ENCODE measurements at regions of chr1 and their contacts with region 1.

Region 1: DNA sequence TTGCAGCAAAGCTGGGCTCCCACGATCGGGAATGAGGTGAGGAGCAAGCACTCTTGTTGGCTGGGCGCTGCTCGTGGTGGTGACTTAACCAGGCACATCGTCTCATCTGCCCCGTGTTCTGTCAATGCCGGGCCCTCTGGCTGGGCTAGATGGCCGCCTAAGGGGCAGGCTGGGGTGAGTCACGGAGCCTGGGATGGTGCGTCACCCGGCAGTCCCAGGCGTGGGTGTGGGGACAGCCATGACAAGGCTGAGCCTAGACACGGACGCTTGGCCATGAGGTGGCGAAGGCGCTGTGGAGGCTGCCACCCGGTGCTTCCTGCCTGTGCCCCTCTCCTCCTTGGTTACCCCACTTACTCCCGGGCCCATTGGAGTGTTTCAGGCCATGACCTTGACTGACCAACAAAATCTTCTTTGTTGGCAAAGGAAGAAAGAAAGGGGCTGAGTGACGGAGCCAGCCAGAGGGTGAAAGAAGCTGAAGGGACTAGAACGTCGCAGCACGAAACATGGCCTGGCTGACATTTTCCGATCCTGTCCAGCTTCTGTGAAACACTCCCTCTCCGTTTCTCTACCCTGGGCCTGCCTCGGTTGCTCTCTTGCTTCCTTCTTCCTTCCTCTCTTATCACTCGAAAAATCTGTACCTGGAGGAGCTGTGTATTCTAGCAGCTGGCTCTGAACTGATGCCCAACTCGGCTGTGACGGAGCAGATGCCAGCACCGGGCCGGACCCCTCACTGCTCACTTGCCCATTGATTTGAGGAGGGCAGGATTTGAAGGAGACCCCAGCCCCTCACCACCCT is 596 bp downstream of the CD247 start:
- DNase-seq: peak; percentile 72 to 92 (median 78)
- H3K4me3 ChIP-seq: peak overlapping the region; percentile 97
- H3K4me3 Mint-ChIP-seq: peak overlapping the region; percentile 94 to 100 (median 100)
- H3K27ac ChIP-seq: peak overlapping the region; percentile 97
- H3K27ac Mint-ChIP-seq: peak overlapping the region; percentile 97 to 100 (median 99)
- H3K4me1 ChIP-seq: peaks cover 47% of the 10 kb centered on the region
- H3K4me1 Mint-ChIP-seq: peaks cover 38 to 60% (median 56%) of the 10 kb centered on the region in 3 donors
- H3K27me3 ChIP-seq: no peaks in the 10 kb centered on the region
- H3K27me3 Mint-ChIP-seq: no peaks in the 10 kb centered on the region

Region 2: GRCh38 chr1:167401260-167401873 is 116.4 kb before region 1 on chr1:
- CTCF ChIA-PET with region 1: interaction called, 13 read pairs
- POLR2A ChIA-PET with region 1: no interaction called
- DNase-seq: peak; percentile 30 to 68 (median 41)
- H3K4me3 ChIP-seq: no peak overlapping the region
- H3K4me3 Mint-ChIP-seq: no peak overlapping the region
- H3K27ac ChIP-seq: no peak overlapping the region
- H3K27ac Mint-ChIP-seq: peak overlapping the region in 3 of 8 donors; percentile 9 to 32 (median 13)
- H3K4me1 ChIP-seq: no peaks in the 10 kb centered on the region
- H3K4me1 Mint-ChIP-seq: peaks cover 0 to 4% (median 3%) of the 10 kb centered on the region in 3 donors
- H3K27me3 ChIP-seq: no peaks in the 10 kb centered on the region
- H3K27me3 Mint-ChIP-seq: no peaks in the 10 kb centered on the region

Region 3: DNA sequence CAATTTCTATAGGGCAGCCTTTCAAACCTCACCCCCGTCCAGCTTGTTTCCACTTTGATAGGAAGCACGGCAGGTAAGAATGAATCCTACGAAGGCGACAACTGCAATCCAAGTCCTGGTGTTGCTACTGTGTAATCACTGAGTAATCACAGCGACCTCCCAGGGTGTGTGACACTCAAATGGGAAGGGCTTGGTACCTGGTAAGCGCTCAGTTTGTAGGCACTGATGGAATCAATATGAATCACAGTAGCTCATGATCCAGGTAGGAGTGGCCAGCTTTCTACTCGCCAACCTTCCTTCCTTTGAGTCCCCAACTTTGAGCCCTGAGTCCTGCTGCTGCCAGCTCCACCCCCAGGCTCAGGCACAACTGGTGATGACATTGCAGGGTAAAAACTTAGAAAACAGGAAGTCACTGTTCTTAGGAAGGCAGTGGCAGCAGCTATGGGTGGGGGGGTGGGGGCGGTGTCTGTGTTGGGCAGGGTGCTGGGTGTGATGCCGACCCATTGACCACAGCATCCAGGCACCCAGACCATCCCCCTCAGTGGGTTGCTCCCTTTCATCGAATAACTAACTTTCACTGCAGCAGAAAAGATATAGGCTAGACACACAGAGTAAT is 70.1 kb before region 1 on chr1:
- CTCF ChIA-PET with region 1: interaction called, 19 read pairs
- POLR2A ChIA-PET with region 1: interaction called, 27 read pairs
- DNase-seq: peak; percentile 52 to 81 (median 71)
- H3K4me3 ChIP-seq: peak overlapping the region; percentile 54
- H3K4me3 Mint-ChIP-seq: peak overlapping the region; percentile 22 to 92 (median 83)
- H3K27ac ChIP-seq: peak overlapping the region; percentile 59
- H3K27ac Mint-ChIP-seq: peak overlapping the region; percentile 81 to 99 (median 96)
- H3K4me1 ChIP-seq: peaks cover 79% of the 10 kb centered on the region
- H3K4me1 Mint-ChIP-seq: peaks cover 78 to 93% (median 86%) of the 10 kb centered on the region in 3 donors
- H3K27me3 ChIP-seq: no peaks in the 10 kb centered on the region
- H3K27me3 Mint-ChIP-seq: peaks cover 0 to 2% of the 10 kb centered on the region in 2 donors

Region 4: DNA sequence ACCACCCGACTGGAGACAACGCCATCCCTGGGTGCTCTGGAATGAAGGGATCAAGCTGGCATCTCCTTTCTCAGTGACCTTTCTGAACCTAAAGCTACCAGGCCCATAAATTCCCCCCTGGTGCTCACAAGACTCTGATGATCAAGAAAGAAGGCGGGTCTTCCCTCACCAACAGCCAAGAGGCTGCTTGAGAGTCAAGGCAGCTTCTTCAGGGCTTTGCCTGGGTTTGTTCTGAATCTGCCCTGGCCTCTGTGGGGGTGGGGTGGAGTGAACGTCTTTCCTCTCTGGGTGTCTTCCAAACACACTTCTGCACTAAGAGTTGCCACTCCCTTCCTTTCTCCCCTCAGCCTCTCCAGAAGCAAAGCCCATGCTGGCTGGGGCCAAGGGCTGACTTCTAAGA is 35.5 kb before region 1 on chr1:
- CTCF ChIA-PET with region 1: interaction called, 13 read pairs
- POLR2A ChIA-PET with region 1: interaction called, 6 read pairs
- DNase-seq: no peak
- H3K4me3 ChIP-seq: peak overlapping the region; percentile 46
- H3K4me3 Mint-ChIP-seq: peak overlapping the region; percentile 52 to 92 (median 71)
- H3K27ac ChIP-seq: no peak overlapping the region
- H3K27ac Mint-ChIP-seq: peak overlapping the region; percentile 83 to 97 (median 92)
- H3K4me1 ChIP-seq: peaks cover 98% of the 10 kb centered on the region
- H3K4me1 Mint-ChIP-seq: peaks cover 93 to 100% (median 99%) of the 10 kb centered on the region in 3 donors
- H3K27me3 ChIP-seq: no peaks in the 10 kb centered on the region
- H3K27me3 Mint-ChIP-seq: no peaks in the 10 kb centered on the region

Region 5: GRCh38 chr1:167533851-167534300 is 16.1 kb after region 1 on chr1:
- CTCF ChIA-PET with region 1: interaction called, 44 read pairs
- POLR2A ChIA-PET with region 1: interaction called, 3 read pairs
- DNase-seq: peak; percentile 43 to 73 (median 57)
- H3K4me3 ChIP-seq: no peak overlapping the region
- H3K4me3 Mint-ChIP-seq: no peak overlapping the region
- H3K27ac ChIP-seq: no peak overlapping the region
- H3K27ac Mint-ChIP-seq: no peak overlapping the region
- H3K4me1 ChIP-seq: no peaks in the 10 kb centered on the region
- H3K4me1 Mint-ChIP-seq: peaks cover under 1 to 4% (median 2%) of the 10 kb centered on the region in 3 donors
- H3K27me3 ChIP-seq: no peaks in the 10 kb centered on the region
- H3K27me3 Mint-ChIP-seq: no peaks in the 10 kb centered on the region

Measured in CD8-positive, alpha-beta memory T cell (primary cell).